MCF 10A (cell line): ENCODE measurements at regions of chr1 and their contacts with region 1.

Region 1: DNA sequence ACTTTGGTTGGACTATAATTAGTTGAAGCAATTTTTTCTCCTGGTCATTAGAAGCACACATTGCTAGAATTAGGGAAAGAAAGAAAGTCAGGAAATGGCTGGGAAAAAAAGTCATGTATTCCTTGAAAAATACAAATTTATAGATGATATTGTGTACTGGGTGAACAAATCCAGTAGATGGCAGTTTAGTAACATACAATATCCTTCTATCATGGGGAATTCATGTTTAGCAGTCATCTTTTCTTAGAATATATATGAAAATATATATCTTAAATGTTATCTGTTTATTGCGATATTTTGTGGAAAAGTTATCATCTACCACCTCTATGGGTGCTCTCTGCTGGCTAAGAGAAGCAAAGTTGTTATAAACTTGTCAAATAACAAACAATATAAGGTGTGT is 13.1 kb upstream of the ZRANB2 start:
- DNase-seq: peak; percentile 17
- H3K4me3 Mint-ChIP-seq: no peak overlapping the region
- H3K27ac Mint-ChIP-seq: no peak overlapping the region
- H3K4me1 Mint-ChIP-seq: no peaks in the 10 kb centered on the region
- H3K27me3 Mint-ChIP-seq: no peaks in the 10 kb centered on the region
- CTCF ChIP-seq: peak; percentile 9

Region 2: DNA sequence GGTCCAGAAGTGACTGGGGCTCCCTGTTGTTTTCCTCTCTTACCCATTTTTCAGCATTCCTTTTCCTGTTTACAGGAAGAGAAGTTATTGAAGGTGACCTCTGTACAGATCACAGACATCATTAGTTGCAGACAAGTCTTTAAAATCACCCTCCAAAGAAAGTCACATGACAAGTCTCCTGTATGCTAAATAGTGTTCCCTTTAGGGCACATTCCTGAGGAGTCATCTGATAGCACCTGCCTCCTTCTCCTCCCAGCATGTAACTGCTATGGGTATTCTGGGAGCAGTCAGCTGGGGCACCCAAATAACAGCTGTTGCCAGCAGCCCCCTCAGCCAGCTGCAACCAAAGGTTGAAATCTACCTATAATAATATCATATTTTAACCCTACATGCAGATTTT is 246.9 kb before region 1 on chr1:
- CTCF ChIA-PET with region 1: no interaction called
- POLR2A ChIA-PET with region 1: no interaction called
- intact Hi-C with region 1: no loop called
- DNase-seq: no peak
- H3K4me3 Mint-ChIP-seq: no peak overlapping the region
- H3K27ac Mint-ChIP-seq: no peak overlapping the region
- H3K4me1 Mint-ChIP-seq: no peaks in the 10 kb centered on the region
- H3K27me3 Mint-ChIP-seq: no peaks in the 10 kb centered on the region
- CTCF ChIP-seq: no peak

Region 3: DNA sequence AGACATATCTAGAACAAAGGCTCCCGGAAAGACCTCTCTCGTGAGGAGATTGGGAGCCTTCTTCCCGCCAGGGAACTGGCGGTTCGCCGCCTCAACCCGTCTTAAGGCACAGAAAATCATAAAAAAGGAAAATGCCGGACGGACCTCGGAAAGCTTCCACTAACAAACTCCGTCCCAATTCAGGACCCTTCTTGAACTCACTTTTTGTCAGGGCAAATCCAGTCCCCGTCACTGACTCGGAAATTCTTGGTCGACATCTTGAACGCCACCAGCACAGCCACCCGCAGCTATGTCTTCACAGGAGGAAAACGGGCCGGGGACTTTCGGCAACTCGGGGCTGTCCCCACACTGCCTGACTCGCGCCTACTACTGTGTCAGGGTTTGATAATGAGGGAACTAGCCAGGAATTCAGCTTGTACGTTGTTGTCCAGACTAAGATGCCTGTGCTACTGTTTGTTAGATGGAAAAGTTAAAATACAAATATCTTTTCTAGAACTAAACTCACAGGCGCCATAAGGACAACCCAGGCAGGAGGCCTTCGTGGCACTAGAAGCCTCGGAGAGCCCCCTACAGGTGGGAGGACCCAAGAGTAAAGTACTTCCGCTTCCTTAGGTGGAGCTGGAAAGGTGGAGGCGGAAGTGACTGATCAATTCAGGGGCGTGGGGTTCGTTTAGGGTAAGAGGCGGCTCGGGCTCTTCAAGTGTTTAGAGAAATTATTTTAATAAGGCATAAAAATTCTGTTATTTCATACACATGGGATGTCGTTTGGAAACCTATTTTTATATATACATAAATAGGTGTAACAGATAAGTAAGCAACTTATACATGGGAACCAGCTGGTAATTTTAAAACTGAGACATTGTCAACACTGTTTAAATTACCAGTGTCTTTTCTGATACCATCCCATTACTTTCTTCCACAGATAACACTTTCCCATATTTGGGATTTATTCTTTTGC is 12.9 kb before region 1 on chr1 and contains the start of gene ZRANB2:
- CTCF ChIA-PET with region 1: interaction called, 4 read pairs
- POLR2A ChIA-PET with region 1: interaction called, 11 read pairs
- intact Hi-C with region 1: no loop called
- DNase-seq: peak; percentile 97
- H3K4me3 Mint-ChIP-seq: peak within 1 kb of the TSS; percentile 97
- H3K27ac Mint-ChIP-seq: peak within 1 kb of the TSS; percentile 100
- H3K4me1 Mint-ChIP-seq: peaks cover 6% of the 10 kb centered on the region
- H3K27me3 Mint-ChIP-seq: peaks cover 11% of the 10 kb centered on the region
- CTCF ChIP-seq: peak; percentile 40
- total RNA-seq, gene ZRANB2: 134 and 164 TPM in 2 replicates

Region 4: DNA sequence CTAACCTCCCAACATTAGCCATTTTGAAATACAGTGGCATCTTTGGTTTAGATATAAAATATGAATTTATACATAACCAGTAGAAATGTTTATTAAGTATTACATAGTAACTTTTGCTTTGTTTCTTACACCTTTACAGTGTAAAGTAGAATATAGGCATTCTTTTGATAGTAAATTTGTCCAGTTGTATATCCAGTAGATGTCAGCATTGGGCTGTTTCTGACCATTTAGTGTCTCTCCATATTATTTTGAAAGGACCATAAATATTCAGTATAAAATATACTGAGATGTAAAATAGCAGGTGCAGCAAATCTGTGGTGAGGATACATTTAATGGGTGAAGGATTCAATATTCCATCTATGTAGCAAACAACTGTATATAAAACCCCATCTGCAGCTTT is 102.7 kb after region 1 on chr1:
- CTCF ChIA-PET with region 1: interaction called, 5 read pairs
- POLR2A ChIA-PET with region 1: no interaction called
- intact Hi-C with region 1: loop called (anchors 10 kb)
- DNase-seq: peak; percentile 45
- H3K4me3 Mint-ChIP-seq: no peak overlapping the region
- H3K27ac Mint-ChIP-seq: no peak overlapping the region
- H3K4me1 Mint-ChIP-seq: no peaks in the 10 kb centered on the region
- H3K27me3 Mint-ChIP-seq: no peaks in the 10 kb centered on the region
- CTCF ChIP-seq: peak; percentile 36

Region 5: DNA sequence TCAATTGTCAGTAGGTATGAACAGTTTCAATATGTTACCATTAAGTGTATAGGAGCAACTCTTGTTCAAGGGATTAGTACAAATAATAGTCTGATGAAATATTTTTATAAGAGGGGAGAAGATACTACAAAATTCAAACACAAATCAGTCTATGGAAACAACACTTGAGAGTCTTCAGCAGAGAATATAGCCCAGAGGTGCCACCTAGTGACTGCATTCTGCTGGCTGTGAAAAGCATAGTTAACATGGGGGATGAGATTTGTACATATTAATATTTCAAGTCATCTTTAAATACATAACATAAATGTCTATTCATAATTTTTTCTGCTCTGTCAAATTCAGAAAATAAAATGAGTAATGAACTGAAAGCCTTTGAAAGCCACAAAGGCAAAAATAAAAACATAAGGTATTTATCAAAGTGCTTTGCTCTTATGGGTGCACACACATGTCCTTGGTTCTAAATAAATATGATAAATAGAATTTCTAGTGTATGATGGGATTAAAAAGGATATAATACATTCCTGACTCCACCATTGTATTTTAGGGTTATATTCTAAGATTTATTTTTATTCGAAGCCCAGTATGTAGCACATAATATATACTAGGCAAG is 427.8 kb after region 1 on chr1:
- CTCF ChIA-PET with region 1: interaction called, 5 read pairs
- POLR2A ChIA-PET with region 1: no interaction called
- intact Hi-C with region 1: loop called (anchors 5 kb)
- DNase-seq: peak; percentile 60
- H3K4me3 Mint-ChIP-seq: no peak overlapping the region
- H3K27ac Mint-ChIP-seq: no peak overlapping the region
- H3K4me1 Mint-ChIP-seq: no peaks in the 10 kb centered on the region
- H3K27me3 Mint-ChIP-seq: no peaks in the 10 kb centered on the region
- CTCF ChIP-seq: peak; percentile 74

Region 6: GRCh38 chr1:71587961-71588360 is 494.0 kb after region 1 on chr1:
- CTCF ChIA-PET with region 1: no interaction called
- POLR2A ChIA-PET with region 1: no interaction called
- intact Hi-C with region 1: loop called (anchors 10 kb)
- DNase-seq: peak; percentile 29
- H3K4me3 Mint-ChIP-seq: no peak overlapping the region
- H3K27ac Mint-ChIP-seq: no peak overlapping the region
- H3K4me1 Mint-ChIP-seq: no peaks in the 10 kb centered on the region
- H3K27me3 Mint-ChIP-seq: no peaks in the 10 kb centered on the region
- CTCF ChIP-seq: peak; percentile 53

Region 7: DNA sequence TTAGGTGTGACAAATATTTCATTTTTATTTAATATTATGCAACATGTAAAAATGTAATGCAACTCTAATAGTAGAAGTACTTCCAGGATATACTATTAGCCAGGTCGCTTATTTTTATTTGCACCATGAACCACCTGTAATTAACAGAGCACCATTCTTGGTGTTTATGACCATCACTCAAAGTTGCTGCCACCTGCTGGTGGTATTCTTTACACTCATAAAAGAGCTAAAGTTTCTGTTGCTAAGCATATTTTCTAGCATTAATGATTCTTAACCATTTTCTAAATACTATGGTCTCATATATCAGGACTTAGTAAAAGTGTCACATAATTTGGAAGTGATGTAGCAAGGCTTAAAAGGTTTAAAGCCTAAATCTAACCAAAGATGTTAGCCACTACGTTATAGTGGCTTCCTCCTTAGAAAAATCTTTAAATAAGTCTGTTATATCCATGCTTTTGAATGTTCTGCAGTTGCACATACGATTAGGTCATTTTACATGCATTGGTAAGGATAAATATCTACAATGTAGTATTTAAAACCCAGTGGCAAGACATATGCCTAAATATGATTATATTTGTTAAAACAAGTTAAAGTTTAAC is 943.9 kb after region 1 on chr1:
- CTCF ChIA-PET with region 1: interaction called, 5 read pairs
- POLR2A ChIA-PET with region 1: no interaction called
- intact Hi-C with region 1: loop called (anchors 2 kb)
- DNase-seq: peak; percentile 60
- H3K4me3 Mint-ChIP-seq: no peak overlapping the region
- H3K27ac Mint-ChIP-seq: no peak overlapping the region
- H3K4me1 Mint-ChIP-seq: no peaks in the 10 kb centered on the region
- H3K27me3 Mint-ChIP-seq: peaks cover 27% of the 10 kb centered on the region
- CTCF ChIP-seq: peak; percentile 56